ENCODE measurements at regions of chr1 and their contacts with region 1.

Region 1: DNA sequence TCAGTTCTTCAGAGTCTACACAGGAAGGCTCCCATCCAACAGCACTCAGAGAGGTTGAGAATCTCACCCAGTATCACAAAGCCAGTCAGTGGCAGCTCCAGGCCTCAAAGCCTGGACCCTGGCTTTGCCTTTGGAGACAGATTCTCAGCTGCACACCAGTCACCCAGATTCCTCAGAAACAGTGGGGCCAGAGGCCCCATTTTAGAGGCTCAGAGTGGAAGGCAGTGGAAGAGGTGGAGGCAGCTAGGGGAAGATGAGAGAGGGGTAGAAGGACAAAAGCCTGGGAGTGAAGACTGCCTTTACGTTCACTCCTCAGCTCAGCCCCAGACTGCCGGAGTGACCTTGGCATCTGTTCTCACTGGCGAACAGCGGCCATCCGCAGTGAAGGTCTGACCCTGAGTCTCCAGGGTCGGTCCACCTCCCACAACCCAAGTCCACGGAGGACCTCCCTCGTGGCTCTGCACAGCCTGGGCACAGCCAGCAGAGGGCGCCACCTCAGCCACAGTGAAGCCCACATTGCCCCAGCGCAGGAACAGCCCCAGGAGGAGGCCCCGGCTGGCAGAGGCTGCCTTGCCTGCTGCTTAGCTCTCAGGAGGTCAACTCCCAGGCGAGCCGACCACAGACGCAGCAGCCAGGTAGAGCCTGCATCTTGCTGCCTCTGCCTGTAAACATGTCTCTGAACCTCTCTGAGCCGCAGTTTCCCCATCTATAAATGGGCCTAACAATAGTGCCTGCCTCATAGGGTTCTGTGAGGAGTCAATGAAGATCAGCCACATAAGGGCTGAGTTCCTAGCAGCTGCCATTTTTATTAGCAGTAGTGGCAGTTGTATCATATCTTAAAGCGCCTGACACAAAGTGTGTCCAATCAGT is 5.9 kb upstream of the FNDC5 start:
- DNase-seq: peak in 4 of 5 donors; percentile 55 to 80 (median 62)
- ATAC-seq: peak; percentile 16 to 69 (median 56)
- H3K4me3 ChIP-seq: no peak overlapping the region
- H3K27ac ChIP-seq: no peak overlapping the region
- H3K4me1 ChIP-seq: peaks cover 0 to 49% (median 16%) of the 10 kb centered on the region in 12 donors
- H3K27me3 ChIP-seq: peaks cover 0 to 12% (median 0%) of the 10 kb centered on the region in 9 donors
- CTCF ChIP-seq: peak; percentile 51 to 90 (median 82)
- POLR2A ChIP-seq: no peak

Region 2: GRCh38 chr1:32400876-32401631 is 475.5 kb before region 1 on chr1:
- intact Hi-C with region 1: loop called in 1 of 10 experiments (anchors 10 kb)
- DNase-seq: peak; percentile 82 to 92 (median 88)
- ATAC-seq: peak; percentile 93 to 99 (median 98)
- H3K4me3 ChIP-seq: no peak overlapping the region
- H3K27ac ChIP-seq: peak overlapping the region in 10 of 12 donors; percentile 2 to 67 (median 42)
- H3K4me1 ChIP-seq: peaks cover 0 to 12% (median 0%) of the 10 kb centered on the region in 12 donors
- H3K27me3 ChIP-seq: no peaks in the 10 kb centered on the region
- CTCF ChIP-seq: peak; percentile 82 to 96 (median 88)
- POLR2A ChIP-seq: peak in 1 of 2 donors; percentile 12

Region 3: DNA sequence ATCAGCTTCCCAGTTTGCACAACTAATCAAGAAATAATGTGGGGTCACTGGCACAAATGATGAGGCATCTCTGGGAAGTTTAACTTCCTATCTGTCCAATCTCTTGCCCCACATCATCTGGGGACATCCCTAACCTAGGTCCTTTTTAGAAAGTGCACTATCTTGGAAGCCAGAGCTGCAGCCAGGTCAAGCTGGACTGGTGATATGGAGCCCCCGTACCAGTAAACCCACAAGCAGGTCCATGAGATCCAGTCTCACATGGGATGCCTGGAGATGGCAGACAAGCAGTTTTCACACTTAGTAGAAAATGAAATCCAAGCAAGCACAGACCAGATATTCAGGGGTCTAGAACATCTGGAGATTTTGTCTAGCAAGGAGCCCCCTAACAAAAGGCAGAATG is 454.8 kb before region 1 on chr1:
- intact Hi-C with region 1: no loop called
- DNase-seq: no peak
- ATAC-seq: no peak
- H3K4me3 ChIP-seq: no peak overlapping the region
- H3K27ac ChIP-seq: no peak overlapping the region
- H3K4me1 ChIP-seq: peaks cover 0 to 5% (median 3%) of the 10 kb centered on the region in 12 donors
- H3K27me3 ChIP-seq: peaks cover 0 to 32% (median 9%) of the 10 kb centered on the region in 9 donors
- CTCF ChIP-seq: no peak
- POLR2A ChIP-seq: no peak

Region 4: DNA sequence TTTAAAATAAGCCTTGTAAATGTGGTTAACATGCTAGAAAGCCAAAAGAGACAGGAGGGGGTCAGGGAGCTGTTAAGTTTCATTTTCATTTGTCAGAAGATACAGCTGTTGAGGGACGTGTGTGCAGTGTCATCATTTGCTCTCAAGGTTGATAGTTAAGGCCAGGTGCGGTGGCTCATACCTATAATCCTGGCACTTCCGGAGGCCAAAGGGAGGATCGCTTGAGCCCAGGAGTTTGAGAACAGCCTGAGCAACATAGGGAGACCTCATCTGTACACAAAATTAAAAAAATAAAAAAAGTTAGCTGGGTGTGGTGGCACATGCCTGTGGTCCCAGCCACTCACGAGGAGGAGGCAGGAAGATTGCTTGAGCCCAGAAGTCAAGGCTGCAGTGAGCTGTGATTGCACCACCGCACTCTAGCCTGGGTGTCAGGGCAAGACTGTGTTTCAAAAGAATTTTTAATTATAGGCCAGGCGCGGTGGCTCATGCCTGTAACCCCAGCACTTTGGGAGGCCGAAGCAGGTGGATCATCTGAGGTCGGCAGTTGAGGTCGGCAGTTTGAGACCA is 248.9 kb before region 1 on chr1:
- intact Hi-C with region 1: no loop called
- DNase-seq: no peak
- ATAC-seq: no peak
- H3K4me3 ChIP-seq: no peak overlapping the region
- H3K27ac ChIP-seq: peak overlapping the region in 1 of 12 donors; percentile 32
- H3K4me1 ChIP-seq: no peaks in the 10 kb centered on the region
- H3K27me3 ChIP-seq: no peaks in the 10 kb centered on the region
- CTCF ChIP-seq: no peak
- POLR2A ChIP-seq: no peak

Region 5: GRCh38 chr1:32716312-32717148 is 160.0 kb before region 1 on chr1:
- intact Hi-C with region 1: loop called in 7 of 10 experiments (anchors 5 to 10 kb)
- DNase-seq: peak in 4 of 5 donors; percentile 48 to 70 (median 61)
- ATAC-seq: peak; percentile 61 to 72 (median 68)
- H3K4me3 ChIP-seq: no peak overlapping the region
- H3K27ac ChIP-seq: no peak overlapping the region
- H3K4me1 ChIP-seq: peaks cover 0 to 10% (median 3%) of the 10 kb centered on the region in 12 donors
- H3K27me3 ChIP-seq: peaks cover 0 to 3% (median 0%) of the 10 kb centered on the region in 9 donors
- CTCF ChIP-seq: no peak
- POLR2A ChIP-seq: peak in 1 of 2 donors; percentile 16

Region 6: DNA sequence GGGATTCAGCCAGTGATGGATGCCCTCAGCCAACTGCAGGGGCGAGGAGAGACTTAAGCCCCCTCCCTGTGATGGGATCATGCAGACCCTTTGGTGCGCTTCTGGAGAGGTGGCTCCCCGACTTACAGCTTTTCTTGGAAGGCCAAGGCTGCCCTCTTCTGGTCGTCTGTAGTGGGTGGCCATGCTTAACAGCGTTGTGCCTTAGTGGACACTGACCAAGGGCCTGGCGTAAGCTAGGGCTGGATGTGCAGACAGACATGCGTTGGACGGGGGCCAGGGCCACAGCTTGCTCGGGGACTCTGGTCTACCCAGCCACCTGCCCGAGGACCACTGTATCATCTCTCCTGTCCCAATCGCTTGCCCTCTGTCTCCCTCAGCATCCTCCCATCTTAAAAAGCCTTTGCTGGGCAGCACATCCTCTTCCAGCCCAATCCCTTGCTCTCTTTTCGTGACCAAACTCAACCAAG is 209.8 kb after region 1 on chr1:
- intact Hi-C with region 1: loop called in 8 of 10 experiments (anchors 1 to 10 kb)
- DNase-seq: peak; percentile 74 to 84 (median 77)
- ATAC-seq: peak; percentile 66 to 89 (median 86)
- H3K4me3 ChIP-seq: no peak overlapping the region
- H3K27ac ChIP-seq: no peak overlapping the region
- H3K4me1 ChIP-seq: peaks cover 0 to 23% (median 4%) of the 10 kb centered on the region in 12 donors
- H3K27me3 ChIP-seq: peaks cover 0 to 7% (median 0%) of the 10 kb centered on the region in 9 donors
- CTCF ChIP-seq: peak; percentile 66 to 86 (median 77)
- POLR2A ChIP-seq: no peak